ENCODE measurements at regions of chr3 and their contacts with region 1.

Region 1: GRCh38 chr3:67017211-67017610 is 19.1 kb downstream of the KBTBD8 start:
- DNase-seq: peak; percentile 64 to 70
- H3K4me3 ChIP-seq: no peak overlapping the region
- H3K4me3 Mint-ChIP-seq: no peak overlapping the region
- H3K27ac Mint-ChIP-seq: no peak overlapping the region
- H3K4me1 ChIP-seq: peaks cover 32% of the 10 kb centered on the region
- H3K4me1 Mint-ChIP-seq: peaks cover 25% of the 10 kb centered on the region
- H3K27me3 ChIP-seq: no peaks in the 10 kb centered on the region
- H3K27me3 Mint-ChIP-seq: no peaks in the 10 kb centered on the region
- CTCF ChIP-seq: no peak

Region 2: GRCh38 chr3:66998113-66998903 is 18.9 kb before region 1 on chr3 and contains the start of gene KBTBD8:
- CTCF ChIA-PET with region 1: interaction called, 3 read pairs
- POLR2A ChIA-PET with region 1: interaction called, 5 read pairs
- intact Hi-C with region 1: loop called (anchors 1 kb)
- DNase-seq: peak; percentile 98
- H3K4me3 ChIP-seq: peak within 1 kb of the TSS; percentile 86
- H3K4me3 Mint-ChIP-seq: peak within 1 kb of the TSS; percentile 88
- H3K27ac Mint-ChIP-seq: no peak within 1 kb of the TSS
- H3K4me1 ChIP-seq: no peaks in the 10 kb centered on the region
- H3K4me1 Mint-ChIP-seq: no peaks in the 10 kb centered on the region
- H3K27me3 ChIP-seq: no peaks in the 10 kb centered on the region
- H3K27me3 Mint-ChIP-seq: no peaks in the 10 kb centered on the region
- CTCF ChIP-seq: no peak
- total RNA-seq, gene KBTBD8: 5.8 and 6.8 TPM in 2 replicates

Region 3: DNA sequence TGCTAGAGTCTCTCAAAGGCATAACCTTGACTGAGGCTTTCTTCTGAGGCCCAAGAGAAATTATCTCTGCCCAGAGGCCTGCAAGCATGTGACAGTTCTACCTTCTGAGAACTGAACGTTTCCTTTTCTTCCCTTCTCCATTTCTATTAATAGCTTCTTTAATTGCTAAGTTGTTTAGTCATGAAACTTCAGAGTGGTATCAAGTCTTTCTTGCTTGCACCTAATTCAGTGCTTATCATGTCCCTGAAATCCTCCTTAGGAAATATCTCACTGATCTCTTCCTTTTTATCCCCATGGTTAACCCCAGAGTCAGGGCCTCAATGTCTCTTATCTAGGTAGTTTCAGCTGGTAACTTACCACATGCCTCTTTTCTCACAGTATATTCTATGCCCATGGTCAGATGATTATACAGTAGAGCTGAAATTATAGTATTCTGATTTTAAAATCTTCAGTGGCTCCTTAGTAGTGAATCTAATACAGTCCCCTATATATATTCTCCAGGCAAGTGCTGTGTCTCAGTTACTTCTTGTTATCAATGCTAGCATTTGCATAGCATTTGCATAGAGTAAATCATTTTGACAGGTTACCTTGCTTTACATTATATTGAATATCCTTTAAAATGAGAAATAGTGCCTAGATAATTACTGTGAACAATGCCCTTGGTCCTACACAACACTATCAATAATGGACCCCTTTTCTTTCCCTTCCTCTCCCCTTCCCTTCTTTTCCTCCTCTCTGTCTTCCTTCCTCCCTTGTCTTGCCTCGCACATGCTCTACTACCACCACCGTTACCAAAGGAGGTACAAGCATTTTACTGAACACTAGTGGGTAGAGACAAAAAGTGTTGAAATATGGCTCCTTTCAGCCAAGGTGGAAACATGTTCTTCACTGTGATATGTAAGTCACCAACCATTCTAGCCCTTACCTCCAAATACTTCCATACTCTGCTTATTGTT is 13.9 kb after region 1 on chr3:
- CTCF ChIA-PET with region 1: no interaction called
- POLR2A ChIA-PET with region 1: no interaction called
- intact Hi-C with region 1: loop called (anchors 1 kb)
- DNase-seq: no peak
- H3K4me3 ChIP-seq: no peak overlapping the region
- H3K4me3 Mint-ChIP-seq: no peak overlapping the region
- H3K27ac Mint-ChIP-seq: no peak overlapping the region
- H3K4me1 ChIP-seq: no peaks in the 10 kb centered on the region
- H3K4me1 Mint-ChIP-seq: peaks cover 16% of the 10 kb centered on the region
- H3K27me3 ChIP-seq: no peaks in the 10 kb centered on the region
- H3K27me3 Mint-ChIP-seq: peaks cover 3% of the 10 kb centered on the region
- CTCF ChIP-seq: no peak